Spleen (tissue), 13 donors: ENCODE measurements at regions of chr15 and their contacts with region 1.

Region 1: DNA sequence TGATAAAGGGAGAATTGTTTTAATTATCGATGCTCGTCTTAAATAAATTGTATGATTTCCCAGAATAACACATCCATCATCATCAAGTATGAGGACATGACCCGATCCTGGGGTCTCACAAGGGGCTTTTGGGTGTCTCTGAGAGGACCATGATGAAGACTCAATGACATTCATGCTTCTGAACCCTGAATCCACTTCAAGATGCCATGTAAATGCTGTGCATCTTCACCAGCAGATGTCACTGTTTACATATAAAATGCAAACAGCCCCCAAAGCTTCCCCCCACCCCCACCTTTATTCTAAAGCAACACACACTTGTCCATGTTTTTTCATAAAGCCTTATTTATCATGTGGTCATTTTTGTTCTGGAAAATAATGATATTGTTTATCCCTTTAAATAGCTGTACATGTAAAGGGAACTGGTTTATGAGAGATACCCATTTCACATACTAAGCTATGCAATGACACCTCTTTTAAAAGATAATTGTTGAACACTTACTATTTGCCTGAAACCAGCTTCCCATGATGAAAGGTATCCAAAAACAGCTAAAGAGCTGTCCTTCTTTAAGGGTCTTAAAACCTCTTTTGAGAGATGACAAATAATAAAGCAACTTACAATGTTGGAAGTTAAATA is 69.7 kb upstream of the UBE3A start:
- DNase-seq: no peak
- H3K4me3 ChIP-seq: no peak overlapping the region
- H3K27ac ChIP-seq: no peak overlapping the region
- H3K4me1 ChIP-seq: peaks cover 0 to 3% (median 0%) of the 10 kb centered on the region in 6 donors
- H3K27me3 ChIP-seq: no peaks in the 10 kb centered on the region
- CTCF ChIP-seq: peak in 10 of 11 experiments; percentile 23 to 73 (median 58)
- POLR2A ChIP-seq: no peak

Region 2: GRCh38 chr15:23642413-23643044 is 1866.0 kb before region 1 on chr15:
- intact Hi-C with region 1: loop called (anchors 10 kb)
- DNase-seq: no peak
- H3K4me3 ChIP-seq: no peak overlapping the region
- H3K27ac ChIP-seq: no peak overlapping the region
- H3K4me1 ChIP-seq: no peaks in the 10 kb centered on the region
- H3K27me3 ChIP-seq: peaks cover 0 to 31% (median 4%) of the 10 kb centered on the region in 7 donors
- CTCF ChIP-seq: peak; percentile 37 to 84 (median 79)
- POLR2A ChIP-seq: no peak

Region 3: DNA sequence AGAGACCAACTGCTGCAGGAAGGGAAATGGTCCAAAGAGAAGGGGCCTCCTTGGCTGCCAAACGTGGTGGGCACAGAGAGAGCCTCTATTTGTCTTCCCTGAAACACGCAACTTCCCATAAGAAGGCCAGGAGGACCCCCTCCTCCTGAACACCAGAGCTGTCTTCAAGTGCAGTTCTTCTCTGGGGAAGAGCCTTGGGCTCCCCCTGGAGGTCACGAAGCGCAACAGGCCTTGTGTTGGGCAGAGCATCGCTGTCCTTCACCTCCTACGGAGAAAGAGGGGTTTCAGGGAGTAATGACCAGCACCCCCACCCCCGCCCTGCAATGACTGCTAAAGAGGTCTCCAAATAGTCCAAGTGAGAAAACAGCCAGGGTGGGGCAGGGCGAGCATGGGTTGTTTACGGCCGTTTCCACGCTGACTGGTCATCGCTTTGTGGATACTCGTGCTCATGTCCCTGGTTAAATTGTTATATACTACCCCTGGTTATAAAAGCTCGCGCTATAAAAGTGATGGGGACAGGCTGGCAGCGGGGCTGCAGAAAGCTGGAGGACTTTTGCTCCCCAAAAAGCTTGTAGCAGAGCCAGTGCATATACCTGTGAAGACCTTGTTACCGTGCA is 752.1 kb after region 1 on chr15:
- intact Hi-C with region 1: loop called (anchors 10 kb)
- DNase-seq: no peak
- H3K4me3 ChIP-seq: no peak overlapping the region
- H3K27ac ChIP-seq: no peak overlapping the region
- H3K4me1 ChIP-seq: no peaks in the 10 kb centered on the region
- H3K27me3 ChIP-seq: peaks cover 0 to 33% (median 0%) of the 10 kb centered on the region in 7 donors
- CTCF ChIP-seq: peak; percentile 18 to 77 (median 61)
- POLR2A ChIP-seq: no peak

Region 4: DNA sequence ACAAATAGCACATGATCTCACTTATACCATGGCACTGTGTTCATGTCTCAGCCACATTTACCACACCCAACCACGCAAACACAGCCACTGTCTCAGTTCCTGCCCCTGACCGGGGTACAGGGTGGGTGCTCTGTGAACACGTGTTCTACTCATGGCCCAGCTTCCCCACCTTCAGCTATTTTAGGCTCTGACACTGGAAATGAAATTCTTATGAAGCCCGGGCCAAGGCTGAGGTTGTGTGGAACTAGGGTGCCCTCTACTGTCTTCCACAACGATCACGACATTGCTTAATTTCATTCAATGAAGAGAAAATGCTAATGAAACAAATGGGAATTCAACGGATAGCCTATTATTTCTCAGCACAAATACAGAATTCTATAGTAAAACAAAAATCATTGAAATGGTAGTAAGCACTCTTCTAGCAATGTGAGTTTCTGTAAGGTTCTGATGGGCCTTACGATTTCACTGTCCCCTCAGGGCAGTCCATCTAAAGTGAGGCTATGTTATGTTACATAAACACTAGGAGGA is 1356.2 kb after region 1 on chr15:
- intact Hi-C with region 1: loop called (anchors 10 kb)
- DNase-seq: no peak
- H3K4me3 ChIP-seq: no peak overlapping the region
- H3K27ac ChIP-seq: no peak overlapping the region
- H3K4me1 ChIP-seq: peaks cover 0 to 11% (median 5%) of the 10 kb centered on the region in 6 donors
- H3K27me3 ChIP-seq: peaks cover 0 to 45% (median 31%) of the 10 kb centered on the region in 7 donors
- CTCF ChIP-seq: peak in 7 of 11 experiments; percentile 23 to 51 (median 34)
- POLR2A ChIP-seq: no peak